ENCODE measurements at regions of chr12 and their contacts with region 1.

Region 1: DNA sequence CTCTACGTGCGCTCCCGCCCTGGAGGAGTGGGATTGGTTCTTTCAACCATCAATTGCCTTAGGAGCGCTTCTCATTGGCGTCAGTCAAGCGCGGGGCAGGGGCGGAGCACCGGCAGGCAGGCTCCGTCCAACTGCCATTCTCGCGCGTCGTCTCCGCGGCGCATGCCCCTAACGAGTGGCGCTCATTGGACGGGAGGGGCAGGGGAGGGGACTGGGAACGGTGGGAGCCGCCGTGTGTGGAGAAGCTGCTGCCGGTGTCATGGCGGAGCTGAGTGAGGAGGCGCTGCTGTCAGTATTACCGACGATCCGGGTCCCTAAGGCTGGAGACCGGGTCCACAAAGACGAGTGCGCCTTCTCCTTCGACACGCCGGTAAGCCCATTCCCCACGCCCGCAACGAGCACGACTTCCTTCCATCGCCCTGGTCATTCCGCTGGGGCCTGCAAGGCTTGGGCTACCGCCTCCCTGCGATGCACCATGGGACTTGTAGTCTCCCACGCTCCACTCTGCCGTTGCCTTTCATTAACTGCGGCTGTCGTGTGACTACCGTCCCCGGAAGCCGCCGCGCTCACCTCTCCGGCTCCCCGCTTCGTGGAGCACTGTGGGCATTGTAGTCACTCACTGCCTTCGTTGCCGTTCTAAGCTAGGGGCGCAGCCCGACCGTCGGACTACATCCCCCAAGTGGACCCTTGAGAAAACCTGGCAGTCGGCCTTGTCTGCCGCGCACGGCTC is at the start of gene USP5:
- DNase-seq: peak; percentile 99
- H3K4me3 ChIP-seq: peak within 1 kb of the TSS; percentile 78
- H3K27me3 ChIP-seq: no peaks in the 10 kb centered on the region
- CTCF ChIP-seq: 0 out of 2 replicates have a peak, but pooled peaks have one; percentile 3
- polyA plus RNA-seq, gene USP5: 52.9 and 90.0 TPM in 2 replicates

Region 2: GRCh38 chr12:6825398-6826124 is 26.5 kb before region 1 on chr12:
- CTCF ChIA-PET with region 1: interaction called, 16 read pairs
- POLR2A ChIA-PET with region 1: interaction called, 7 read pairs
- DNase-seq: no peak
- H3K4me3 ChIP-seq: peak overlapping the region; percentile 32
- H3K27me3 ChIP-seq: peaks cover 3% of the 10 kb centered on the region; the same call in 1 of the 2 replicates
- CTCF ChIP-seq: peak; percentile 97

Region 3: GRCh38 chr12:6839482-6840201 is 12.4 kb before region 1 on chr12:
- CTCF ChIA-PET with region 1: interaction called, 111 read pairs
- POLR2A ChIA-PET with region 1: interaction called, 4 read pairs
- DNase-seq: no peak
- H3K4me3 ChIP-seq: no peak overlapping the region
- H3K27me3 ChIP-seq: no peaks in the 10 kb centered on the region
- CTCF ChIP-seq: no peak

Region 4: DNA sequence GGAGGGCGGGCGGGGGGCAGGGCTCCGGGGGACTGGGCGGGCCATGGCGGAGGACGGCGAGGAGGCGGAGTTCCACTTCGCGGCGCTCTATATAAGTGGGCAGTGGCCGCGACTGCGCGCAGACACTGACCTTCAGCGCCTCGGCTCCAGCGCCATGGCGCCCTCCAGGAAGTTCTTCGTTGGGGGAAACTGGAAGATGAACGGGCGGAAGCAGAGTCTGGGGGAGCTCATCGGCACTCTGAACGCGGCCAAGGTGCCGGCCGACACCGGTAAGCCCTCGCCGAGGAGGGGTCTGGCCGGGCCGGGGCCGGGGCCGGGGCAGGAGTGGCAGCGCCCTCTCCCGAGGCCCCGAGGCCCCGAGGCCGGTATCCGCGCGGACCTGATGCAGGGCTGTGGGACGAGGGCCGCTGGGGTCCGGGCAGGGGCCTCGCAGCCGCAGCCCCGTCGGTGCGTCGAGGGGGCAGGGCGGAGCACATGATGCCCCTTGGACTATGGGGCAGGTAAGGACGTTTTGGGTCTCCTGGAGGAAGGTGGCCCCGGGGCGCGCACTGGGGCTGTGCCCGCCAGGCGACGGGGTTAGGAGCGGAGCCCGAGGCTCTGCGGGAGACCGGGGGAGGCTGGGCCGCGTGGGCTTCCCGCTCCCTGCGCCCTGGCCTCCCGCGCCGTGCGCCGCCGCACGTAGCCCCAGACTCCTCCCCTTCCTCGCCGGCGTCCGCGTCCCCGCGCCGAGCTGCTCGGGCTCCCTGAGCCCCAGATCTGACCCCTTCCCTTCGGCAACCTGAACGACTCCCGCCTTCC is 15.5 kb after region 1 on chr12 and contains the start of gene TPI1:
- CTCF ChIA-PET with region 1: interaction called, 112 read pairs
- POLR2A ChIA-PET with region 1: interaction called, 34 read pairs
- DNase-seq: no peak
- H3K4me3 ChIP-seq: peak within 1 kb of the TSS; percentile 98
- H3K27me3 ChIP-seq: no peaks in the 10 kb centered on the region
- CTCF ChIP-seq: no peak
- polyA plus RNA-seq, gene TPI1: 2,446 and 2,656 TPM in 2 replicates